AG04449 (cell line): ENCODE measurements at regions of chr17 and their contacts with region 1.

Region 1: DNA sequence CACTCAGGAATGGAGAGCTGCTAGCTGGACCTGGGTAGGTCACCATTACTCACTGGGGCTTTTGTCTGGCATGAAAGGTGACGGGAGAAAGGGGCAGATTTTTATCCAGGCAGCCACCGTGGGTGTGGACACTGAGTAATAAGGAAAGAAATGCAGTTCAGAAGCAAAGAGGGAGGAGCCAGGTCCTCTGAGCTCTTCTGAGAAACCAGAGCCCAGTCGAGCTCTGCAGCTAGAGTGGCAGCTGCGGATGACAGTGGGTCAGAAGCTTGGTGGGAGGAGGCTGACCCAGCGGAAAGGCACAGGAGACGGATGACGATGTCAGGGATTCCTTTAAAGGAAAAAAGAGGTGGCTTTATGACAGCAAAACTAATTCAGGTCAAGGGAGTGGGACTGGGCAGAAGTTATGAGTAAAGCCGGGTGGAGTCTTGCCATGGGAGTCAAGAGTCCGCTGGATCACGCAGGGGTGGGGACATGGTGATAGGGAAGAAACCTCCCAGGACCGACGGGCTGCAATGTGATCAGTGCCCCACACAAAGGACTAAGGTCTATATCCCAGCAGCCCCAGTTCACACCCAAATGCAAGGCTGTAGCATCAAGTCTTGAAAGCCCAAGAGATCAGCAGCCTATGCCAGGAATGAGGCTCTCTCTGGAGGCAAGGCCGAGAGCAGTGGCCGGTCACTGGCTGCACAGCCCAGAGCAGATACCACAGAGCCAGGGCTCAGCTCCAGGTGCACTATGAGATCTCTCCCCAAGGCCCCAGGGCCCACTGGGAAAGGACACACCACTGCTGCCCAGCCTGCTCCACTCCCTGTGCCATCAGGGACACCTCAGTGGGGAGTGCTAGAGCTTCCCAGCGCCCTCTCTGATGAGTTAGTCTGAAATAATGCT is 6.3 kb upstream of the MNT start:
- DNase-seq: no peak
- H3K4me3 ChIP-seq: no peak overlapping the region
- CTCF ChIP-seq: no peak

Region 2: GRCh38 chr17:2392252-2393173 is 14.6 kb before region 1 on chr17:
- CTCF ChIA-PET with region 1: interaction called, 871 read pairs
- POLR2A ChIA-PET with region 1: interaction called, 17 read pairs
- DNase-seq: no peak
- H3K4me3 ChIP-seq: peak overlapping the region; percentile 62
- CTCF ChIP-seq: no peak